WTC11 (cell line): ENCODE measurements at regions of chr6 and their contacts with region 1.

Region 1: GRCh38 chr6:168132531-168133167 is 53.6 kb upstream of the FRMD1 start:
- DNase-seq: peak; percentile 75
- ATAC-seq: peak; percentile 78
- H3K4me3 Mint-ChIP-seq: peak overlapping the region; percentile 27
- H3K27ac Mint-ChIP-seq: no peak overlapping the region
- H3K4me1 Mint-ChIP-seq: peaks cover 33% of the 10 kb centered on the region
- H3K27me3 Mint-ChIP-seq: peaks cover 23% of the 10 kb centered on the region
- CTCF ChIP-seq: no peak; the same call in 1 of the 2 replicates

Region 2: DNA sequence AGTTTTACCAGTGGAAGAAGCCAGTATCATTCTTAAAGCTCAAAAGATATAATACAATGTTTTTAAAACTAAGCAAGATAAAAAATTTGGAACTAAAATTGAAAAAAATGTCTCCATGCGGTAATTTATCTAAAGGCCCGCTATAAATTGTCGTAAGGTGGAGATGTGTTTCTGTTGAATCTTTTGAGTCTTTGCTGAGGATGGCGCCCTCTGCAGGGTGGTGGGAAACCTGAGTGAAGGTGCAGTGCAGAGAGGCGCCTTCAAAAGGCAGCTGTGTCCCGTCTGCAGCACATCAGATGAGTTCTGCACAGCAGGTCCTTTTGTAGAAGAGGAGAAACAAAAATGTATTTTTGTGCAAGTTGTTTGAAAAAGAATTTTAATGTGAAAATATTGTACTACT is 164.6 kb before region 1 on chr6:
- CTCF ChIA-PET with region 1: interaction called, 17 read pairs
- POLR2A ChIA-PET with region 1: no interaction called
- DNase-seq: peak; percentile 83
- ATAC-seq: peak; percentile 86
- H3K4me3 Mint-ChIP-seq: no peak overlapping the region
- H3K27ac Mint-ChIP-seq: no peak overlapping the region
- H3K4me1 Mint-ChIP-seq: peaks cover 12% of the 10 kb centered on the region
- H3K27me3 Mint-ChIP-seq: no peaks in the 10 kb centered on the region
- CTCF ChIP-seq: peak; percentile 60

Region 3: GRCh38 chr6:168045141-168045691 is 87.4 kb before region 1 on chr6:
- CTCF ChIA-PET with region 1: interaction called, 12 read pairs
- POLR2A ChIA-PET with region 1: no interaction called
- DNase-seq: no peak
- ATAC-seq: no peak
- H3K4me3 Mint-ChIP-seq: no peak overlapping the region
- H3K27ac Mint-ChIP-seq: no peak overlapping the region
- H3K4me1 Mint-ChIP-seq: no peaks in the 10 kb centered on the region
- H3K27me3 Mint-ChIP-seq: peaks cover 6% of the 10 kb centered on the region; the same call in 1 of the 2 replicates
- CTCF ChIP-seq: no peak

Region 4: GRCh38 chr6:168060521-168060931 is 72.1 kb before region 1 on chr6:
- CTCF ChIA-PET with region 1: interaction called, 83 read pairs
- POLR2A ChIA-PET with region 1: no interaction called
- DNase-seq: peak; percentile 65
- ATAC-seq: peak; percentile 35
- H3K4me3 Mint-ChIP-seq: no peak overlapping the region
- H3K27ac Mint-ChIP-seq: no peak overlapping the region
- H3K4me1 Mint-ChIP-seq: no peaks in the 10 kb centered on the region
- H3K27me3 Mint-ChIP-seq: no peaks in the 10 kb centered on the region
- CTCF ChIP-seq: no peak

Region 5: DNA sequence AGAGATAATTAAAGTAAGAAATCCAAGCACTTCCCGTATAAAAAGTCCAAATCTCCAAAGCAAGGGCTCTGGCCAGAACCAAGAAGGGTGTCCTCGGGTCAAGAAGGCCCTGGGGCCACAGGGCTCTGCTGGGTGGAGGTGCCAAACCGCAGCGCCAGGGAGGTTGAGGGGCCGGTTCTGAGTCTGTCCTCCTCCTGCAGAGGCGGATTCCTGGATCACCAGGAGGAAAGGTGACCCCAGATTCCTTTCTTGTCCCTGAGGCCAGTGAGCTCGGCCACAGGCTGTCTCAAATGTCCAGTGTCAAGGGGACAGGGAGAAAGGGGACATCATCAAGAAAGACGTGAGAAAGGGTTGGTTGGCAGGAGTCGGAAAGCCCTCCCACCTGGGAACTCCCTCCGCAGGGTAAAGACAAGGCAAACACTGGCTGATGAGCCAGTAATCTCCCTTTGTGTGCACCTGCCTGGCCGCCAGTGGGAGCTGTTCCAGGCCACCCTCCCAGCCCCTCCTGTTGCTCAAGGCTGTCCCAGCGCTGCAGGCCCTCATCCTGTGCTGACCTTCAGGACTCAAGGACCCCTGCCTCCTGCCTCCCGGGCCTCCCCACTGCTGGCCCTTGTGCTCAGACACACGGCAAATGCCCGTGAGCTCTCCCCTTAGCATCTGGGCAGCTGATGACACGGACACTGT is 61.2 kb before region 1 on chr6:
- CTCF ChIA-PET with region 1: interaction called, 19 read pairs
- POLR2A ChIA-PET with region 1: interaction called, 3 read pairs
- DNase-seq: peak; percentile 72
- ATAC-seq: peak; percentile 96
- H3K4me3 Mint-ChIP-seq: no peak overlapping the region
- H3K27ac Mint-ChIP-seq: no peak overlapping the region
- H3K4me1 Mint-ChIP-seq: peaks cover 6% of the 10 kb centered on the region
- H3K27me3 Mint-ChIP-seq: no peaks in the 10 kb centered on the region
- CTCF ChIP-seq: peak; percentile 17; the same call in 1 of the 2 replicates

Region 6: GRCh38 chr6:168102315-168102985 is 30.2 kb before region 1 on chr6:
- CTCF ChIA-PET with region 1: interaction called, 20 read pairs
- POLR2A ChIA-PET with region 1: no interaction called
- DNase-seq: no peak
- ATAC-seq: no peak; the same call in none of the 2 replicates
- H3K4me3 Mint-ChIP-seq: peak overlapping the region; percentile 54
- H3K27ac Mint-ChIP-seq: no peak overlapping the region
- H3K4me1 Mint-ChIP-seq: peaks cover 45% of the 10 kb centered on the region
- H3K27me3 Mint-ChIP-seq: peaks cover 33% of the 10 kb centered on the region
- CTCF ChIP-seq: no peak

Region 7: DNA sequence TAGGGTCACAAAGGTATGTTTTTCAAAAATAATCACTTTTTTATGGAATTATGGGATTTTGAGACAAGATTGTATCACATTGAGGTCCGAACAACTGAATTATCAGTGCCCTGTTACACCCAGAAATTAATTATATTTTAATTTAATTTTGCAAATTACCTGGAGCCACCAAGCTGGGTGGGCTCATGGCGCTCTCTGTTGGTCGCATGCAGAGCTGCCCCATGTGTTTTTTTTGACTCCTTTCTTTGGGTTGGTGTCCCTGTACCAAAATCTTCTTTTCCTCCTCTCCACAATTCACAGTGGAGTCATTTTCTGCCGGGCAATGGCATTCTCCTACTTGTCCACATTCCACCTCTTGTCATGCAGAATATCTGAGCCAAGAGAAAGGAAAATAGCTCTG is 14.7 kb before region 1 on chr6:
- CTCF ChIA-PET with region 1: interaction called, 32 read pairs
- POLR2A ChIA-PET with region 1: no interaction called
- DNase-seq: no peak
- ATAC-seq: peak; percentile 54
- H3K4me3 Mint-ChIP-seq: no peak overlapping the region
- H3K27ac Mint-ChIP-seq: no peak overlapping the region
- H3K4me1 Mint-ChIP-seq: peaks cover 19% of the 10 kb centered on the region
- H3K27me3 Mint-ChIP-seq: peaks cover 7% of the 10 kb centered on the region
- CTCF ChIP-seq: no peak